Activated B cell treated with CpG ODN at 0.5 μM for 24 hours (primary cell): ENCODE measurements at regions of chr7 and their contacts with region 1.

Region 1: GRCh38 chr7:128904381-128905197 is 5.9 kb downstream of the KCP start:
- DNase-seq: no peak
- ATAC-seq: peak; percentile 90
- H3K4me3 Mint-ChIP-seq: no peak overlapping the region
- H3K27ac Mint-ChIP-seq: no peak overlapping the region
- H3K4me1 Mint-ChIP-seq: peaks cover 8% of the 10 kb centered on the region
- H3K27me3 Mint-ChIP-seq: peaks cover 7% of the 10 kb centered on the region
- CTCF ChIP-seq: no peak

Region 2: GRCh38 chr7:128812514-128813168 is 91.9 kb before region 1 on chr7:
- CTCF ChIA-PET with region 1: no interaction called
- POLR2A ChIA-PET with region 1: no interaction called
- intact Hi-C with region 1: no loop called
- DNase-seq: no peak
- ATAC-seq: no peak
- H3K4me3 Mint-ChIP-seq: no peak overlapping the region
- H3K27ac Mint-ChIP-seq: no peak overlapping the region
- H3K4me1 Mint-ChIP-seq: no peaks in the 10 kb centered on the region
- H3K27me3 Mint-ChIP-seq: no peaks in the 10 kb centered on the region
- CTCF ChIP-seq: no peak

Region 3: DNA sequence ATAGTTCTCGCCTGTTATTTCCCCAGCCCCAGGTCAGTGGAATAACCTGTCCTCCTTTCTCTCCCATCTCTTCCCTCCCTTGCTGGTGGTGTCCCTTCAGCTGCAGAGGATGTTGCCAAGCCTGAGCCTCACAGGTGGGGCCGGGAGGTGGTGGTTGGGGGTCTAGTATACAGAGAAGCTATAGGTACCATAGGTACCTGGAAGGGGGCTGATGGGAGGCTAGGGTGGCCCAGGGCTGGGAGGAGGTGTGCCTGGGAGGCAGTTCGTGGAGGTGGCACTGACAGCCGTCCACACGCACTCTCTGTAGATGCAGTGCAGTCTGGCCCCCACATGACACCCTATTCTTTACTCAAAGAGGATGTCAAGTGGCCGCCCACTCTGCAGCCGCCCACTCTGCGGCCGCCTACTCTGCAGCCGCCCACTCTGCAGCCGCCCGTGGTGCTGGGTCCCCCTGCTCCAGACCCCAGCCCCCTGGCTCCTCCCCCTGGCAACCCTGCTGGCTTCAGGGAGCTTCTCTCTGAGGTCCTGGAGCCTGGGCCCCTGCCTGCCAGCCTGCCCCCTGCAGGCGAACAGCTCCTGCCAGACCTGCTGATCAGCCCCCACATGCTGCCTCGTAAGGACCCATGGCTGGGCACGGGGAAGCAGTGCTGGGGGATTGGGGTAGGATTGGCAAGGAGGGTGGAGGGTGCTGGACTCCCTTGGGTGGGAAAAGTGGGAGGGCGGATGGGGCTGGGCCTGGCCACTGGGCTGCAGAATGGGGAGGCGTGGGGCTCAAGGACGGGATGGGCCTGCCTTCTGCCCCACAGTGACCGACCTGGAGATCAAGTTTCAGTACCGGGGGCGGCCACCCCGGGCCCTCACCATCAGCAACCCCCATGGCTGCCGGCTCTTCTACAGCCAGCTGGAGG is 42.6 kb after region 1 on chr7:
- CTCF ChIA-PET with region 1: interaction called, 3 read pairs
- POLR2A ChIA-PET with region 1: no interaction called
- intact Hi-C with region 1: loop called (anchors 1 kb)
- DNase-seq: no peak
- ATAC-seq: peak; percentile 45
- H3K4me3 Mint-ChIP-seq: no peak overlapping the region
- H3K27ac Mint-ChIP-seq: no peak overlapping the region
- H3K4me1 Mint-ChIP-seq: peaks cover 26% of the 10 kb centered on the region
- H3K27me3 Mint-ChIP-seq: no peaks in the 10 kb centered on the region
- CTCF ChIP-seq: no peak

Region 4: DNA sequence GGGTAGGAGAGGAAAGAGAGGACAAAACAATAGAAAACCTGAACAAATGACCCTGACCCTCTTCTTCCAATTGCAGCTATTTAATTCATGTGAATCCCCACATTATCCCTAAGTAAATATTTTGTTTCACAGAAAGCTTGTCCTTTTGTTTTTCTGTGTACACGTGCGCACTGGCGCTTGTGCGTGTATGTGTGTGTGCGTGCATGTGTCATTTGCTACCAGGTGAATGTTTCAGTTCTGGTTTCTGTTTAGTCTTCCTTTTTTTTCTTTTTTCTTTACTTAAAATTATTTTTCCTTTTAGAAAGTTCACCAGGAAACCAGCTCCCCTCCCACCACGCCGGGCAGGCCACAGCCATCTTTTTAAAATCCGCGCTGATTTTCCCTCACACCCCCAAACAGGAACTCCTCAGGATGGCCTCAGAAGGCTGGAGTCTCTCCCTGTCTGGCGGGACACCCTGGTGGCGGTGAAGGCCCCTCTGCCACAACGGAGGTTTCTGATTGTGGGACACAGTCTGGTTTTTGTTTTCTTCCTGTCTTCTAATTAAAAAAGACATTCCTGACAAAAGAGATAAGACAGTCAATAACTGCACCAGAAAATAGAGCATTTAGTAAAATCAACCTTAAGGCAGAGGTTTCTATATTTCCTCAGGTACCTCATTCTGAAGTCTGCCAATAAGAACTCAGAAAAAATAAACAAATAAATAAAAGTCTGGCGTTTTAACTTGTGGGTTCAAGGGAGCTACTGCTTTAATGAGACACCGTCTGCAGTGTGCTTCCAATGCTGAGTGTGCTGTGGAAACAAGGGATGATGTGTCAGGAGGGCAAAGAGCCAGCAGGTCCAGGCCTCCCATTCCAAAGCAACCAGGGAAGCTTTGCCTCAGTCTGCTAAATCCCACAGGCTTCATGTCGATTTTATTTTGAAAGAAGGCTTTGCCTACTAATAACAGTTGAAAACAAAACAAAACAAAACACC is 50.5 kb after region 1 on chr7:
- CTCF ChIA-PET with region 1: no interaction called
- POLR2A ChIA-PET with region 1: no interaction called
- intact Hi-C with region 1: loop called (anchors 1 kb)
- DNase-seq: no peak
- ATAC-seq: peak; percentile 82
- H3K4me3 Mint-ChIP-seq: peak overlapping the region; percentile 61
- H3K27ac Mint-ChIP-seq: peak overlapping the region; percentile 93
- H3K4me1 Mint-ChIP-seq: peaks cover 51% of the 10 kb centered on the region
- H3K27me3 Mint-ChIP-seq: no peaks in the 10 kb centered on the region
- CTCF ChIP-seq: no peak

Region 5: GRCh38 chr7:129271500-129272355 is 367.1 kb after region 1 on chr7:
- CTCF ChIA-PET with region 1: no interaction called
- POLR2A ChIA-PET with region 1: no interaction called
- intact Hi-C with region 1: loop called (anchors 10 kb)
- DNase-seq: no peak
- ATAC-seq: peak; percentile 83
- H3K4me3 Mint-ChIP-seq: peak overlapping the region; percentile 69
- H3K27ac Mint-ChIP-seq: peak overlapping the region; percentile 69
- H3K4me1 Mint-ChIP-seq: peaks cover 21% of the 10 kb centered on the region
- H3K27me3 Mint-ChIP-seq: no peaks in the 10 kb centered on the region
- CTCF ChIP-seq: peak; percentile 28